Activated T-helper 1 cell treated with anti-CD3 and anti-CD28 coated beads, Interleukin-12 subunit alpha, Interleukin-12 subunit beta, Interleukin-2, Interleukin-4 antibody, amounts not matched to agents 30 ng/mL and 10 ng/mL and 1 ng/mL, durations not matched to agents 14 hours and 24 hours and 36 hours (primary cell): ENCODE measurements at regions of chr6 and their contacts with region 1.

Region 1: DNA sequence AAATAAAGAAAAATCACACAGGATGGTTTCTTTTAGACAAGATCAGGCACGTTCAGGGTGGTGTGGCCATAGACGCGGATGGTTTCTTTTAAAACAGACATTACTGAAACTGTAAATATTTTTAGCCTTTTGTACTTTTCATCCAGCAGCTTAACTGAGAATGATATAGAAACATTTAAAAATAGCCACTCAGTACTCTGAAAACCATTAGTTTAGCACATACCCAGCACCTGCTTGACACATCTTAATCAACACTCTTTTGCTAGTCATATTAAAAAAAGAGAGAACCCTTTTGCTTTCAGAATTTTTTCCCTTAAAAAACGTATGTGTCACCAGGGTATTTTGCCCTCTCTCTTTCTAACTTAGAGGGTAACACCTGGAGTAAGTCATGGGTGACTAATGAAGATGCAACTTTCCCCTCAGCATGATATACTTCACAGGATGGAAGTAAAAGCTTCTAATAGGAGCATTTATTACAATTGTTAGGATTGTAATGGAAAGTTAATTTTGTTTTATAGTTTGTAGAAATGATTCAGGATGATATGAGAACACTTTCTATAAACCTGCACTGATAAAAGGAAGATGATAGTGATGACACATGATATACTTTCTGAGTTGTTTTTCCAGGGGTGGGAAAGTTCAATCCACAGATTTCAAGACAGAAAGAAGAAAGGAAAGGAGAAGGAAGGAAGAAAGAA is 45.2 kb downstream of the BACH2 start:
- DNase-seq: no peak
- H3K4me3 Mint-ChIP-seq: peak overlapping the region; percentile 34
- H3K27ac Mint-ChIP-seq: peak overlapping the region; percentile 90
- H3K4me1 Mint-ChIP-seq: peaks cover 84% of the 10 kb centered on the region
- H3K27me3 Mint-ChIP-seq: peaks cover 2% of the 10 kb centered on the region

Region 2: GRCh38 chr6:90144396-90144795 is 107.0 kb before region 1 on chr6:
- intact Hi-C with region 1: loop called (anchors 1 kb)
- DNase-seq: no peak
- H3K4me3 Mint-ChIP-seq: peak overlapping the region; percentile 45
- H3K27ac Mint-ChIP-seq: peak overlapping the region; percentile 78
- H3K4me1 Mint-ChIP-seq: peaks cover 66% of the 10 kb centered on the region
- H3K27me3 Mint-ChIP-seq: peaks cover 15% of the 10 kb centered on the region

Region 3: GRCh38 chr6:90219209-90219985 is 32.0 kb before region 1 on chr6:
- intact Hi-C with region 1: loop called (anchors 1 kb)
- DNase-seq: no peak
- H3K4me3 Mint-ChIP-seq: no peak overlapping the region
- H3K27ac Mint-ChIP-seq: no peak overlapping the region
- H3K4me1 Mint-ChIP-seq: no peaks in the 10 kb centered on the region
- H3K27me3 Mint-ChIP-seq: no peaks in the 10 kb centered on the region

Region 4: GRCh38 chr6:90274451-90275030 is 23.1 kb after region 1 on chr6:
- intact Hi-C with region 1: loop called (anchors 1 kb)
- DNase-seq: peak; percentile 75
- H3K4me3 Mint-ChIP-seq: peak overlapping the region; percentile 75
- H3K27ac Mint-ChIP-seq: peak overlapping the region; percentile 94
- H3K4me1 Mint-ChIP-seq: peaks cover 86% of the 10 kb centered on the region
- H3K27me3 Mint-ChIP-seq: no peaks in the 10 kb centered on the region

Region 5: DNA sequence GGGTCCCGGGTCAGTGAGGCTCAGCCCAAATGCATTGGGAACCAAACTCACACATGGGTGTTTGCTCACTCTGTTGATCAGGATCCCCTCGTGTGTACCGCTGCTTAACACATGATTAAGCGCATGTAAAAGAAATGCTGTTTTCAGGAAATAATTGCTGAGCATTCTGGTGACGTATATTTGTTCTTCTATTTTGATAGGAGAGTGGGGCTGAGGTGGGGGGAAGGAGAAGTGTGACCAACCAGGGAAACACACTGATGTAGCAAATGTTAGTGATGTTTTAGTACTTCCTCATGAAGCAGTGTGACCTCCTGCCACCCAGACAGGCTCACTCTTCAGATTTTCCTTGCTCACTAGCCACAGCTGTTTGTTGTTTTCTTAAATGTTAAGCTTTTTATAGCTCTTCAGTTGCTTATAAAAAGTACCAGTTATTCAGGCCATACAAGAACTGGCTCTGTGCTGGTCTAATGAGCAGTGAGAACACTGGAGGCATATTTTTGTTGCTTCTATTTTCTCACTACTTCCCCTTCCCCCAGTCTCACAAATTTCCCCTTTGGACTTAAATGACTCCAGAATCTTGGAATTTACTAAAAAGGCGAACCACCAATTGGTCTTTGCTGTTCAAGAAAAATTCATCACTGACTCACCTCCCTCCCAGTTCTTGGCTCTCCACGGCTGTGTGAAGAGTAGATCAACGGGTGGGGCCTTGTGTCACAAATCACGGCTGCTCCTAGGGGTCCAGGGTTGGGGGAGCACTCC is 124.4 kb after region 1 on chr6:
- intact Hi-C with region 1: no loop called
- DNase-seq: no peak
- H3K4me3 Mint-ChIP-seq: no peak overlapping the region
- H3K27ac Mint-ChIP-seq: no peak overlapping the region
- H3K4me1 Mint-ChIP-seq: peaks cover 2% of the 10 kb centered on the region
- H3K27me3 Mint-ChIP-seq: peaks cover 14% of the 10 kb centered on the region

Region 6: DNA sequence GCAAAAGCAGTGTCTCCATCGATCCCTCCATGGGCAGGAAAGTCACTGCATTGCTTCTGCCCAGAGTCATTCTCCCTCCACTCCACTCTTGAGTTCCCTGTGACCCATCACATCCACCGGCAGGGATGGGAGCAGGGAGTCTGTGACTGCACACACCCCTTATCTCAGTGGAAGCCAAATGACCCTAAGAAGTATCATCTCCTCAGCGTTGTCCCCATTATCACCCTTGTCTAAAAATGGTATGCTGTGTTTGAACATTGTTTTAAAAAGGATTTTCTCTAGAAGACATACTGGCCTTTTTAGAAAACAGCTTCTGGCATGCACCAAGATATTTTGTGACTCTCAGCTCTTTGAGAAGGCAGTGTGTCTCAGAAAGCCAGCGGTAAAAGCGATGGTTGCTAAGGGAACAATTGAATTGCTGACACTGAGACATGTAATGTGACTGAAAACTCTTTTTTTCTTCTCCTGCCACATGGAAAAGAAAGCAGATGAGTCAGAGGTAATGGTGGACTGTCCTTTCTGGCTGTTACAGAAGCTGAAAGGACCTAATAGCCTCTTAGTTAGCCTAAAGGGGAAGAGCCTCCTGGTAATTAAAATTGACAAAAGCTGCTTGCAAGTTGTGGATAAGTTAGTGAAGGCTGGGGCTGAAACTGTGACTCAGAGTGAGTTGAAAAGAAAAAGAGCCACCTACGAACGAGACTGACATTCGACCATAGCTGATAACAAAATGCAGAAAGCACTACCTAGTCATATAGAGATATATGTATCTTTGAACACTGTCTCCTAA is 214.9 kb after region 1 on chr6:
- intact Hi-C with region 1: loop called (anchors 1 kb)
- DNase-seq: no peak
- H3K4me3 Mint-ChIP-seq: peak overlapping the region; percentile 61
- H3K27ac Mint-ChIP-seq: peak overlapping the region; percentile 92
- H3K4me1 Mint-ChIP-seq: peaks cover 93% of the 10 kb centered on the region
- H3K27me3 Mint-ChIP-seq: no peaks in the 10 kb centered on the region

Region 7: GRCh38 chr6:90631046-90631445 is 379.6 kb after region 1 on chr6:
- intact Hi-C with region 1: no loop called
- DNase-seq: no peak
- H3K4me3 Mint-ChIP-seq: no peak overlapping the region
- H3K27ac Mint-ChIP-seq: no peak overlapping the region
- H3K4me1 Mint-ChIP-seq: no peaks in the 10 kb centered on the region
- H3K27me3 Mint-ChIP-seq: peaks cover 13% of the 10 kb centered on the region